ENCODE measurements at regions of chr1 and their contacts with region 1.

Region 1: GRCh38 chr1:47333922-47334764 is 553 bp downstream of the CMPK1 start:
- DNase-seq: peak; percentile 74
- H3K4me3 Mint-ChIP-seq: peak overlapping the region; percentile 93
- H3K27ac Mint-ChIP-seq: peak overlapping the region; percentile 95
- H3K4me1 Mint-ChIP-seq: peaks cover 18% of the 10 kb centered on the region
- H3K27me3 Mint-ChIP-seq: no peaks in the 10 kb centered on the region

Region 2: DNA sequence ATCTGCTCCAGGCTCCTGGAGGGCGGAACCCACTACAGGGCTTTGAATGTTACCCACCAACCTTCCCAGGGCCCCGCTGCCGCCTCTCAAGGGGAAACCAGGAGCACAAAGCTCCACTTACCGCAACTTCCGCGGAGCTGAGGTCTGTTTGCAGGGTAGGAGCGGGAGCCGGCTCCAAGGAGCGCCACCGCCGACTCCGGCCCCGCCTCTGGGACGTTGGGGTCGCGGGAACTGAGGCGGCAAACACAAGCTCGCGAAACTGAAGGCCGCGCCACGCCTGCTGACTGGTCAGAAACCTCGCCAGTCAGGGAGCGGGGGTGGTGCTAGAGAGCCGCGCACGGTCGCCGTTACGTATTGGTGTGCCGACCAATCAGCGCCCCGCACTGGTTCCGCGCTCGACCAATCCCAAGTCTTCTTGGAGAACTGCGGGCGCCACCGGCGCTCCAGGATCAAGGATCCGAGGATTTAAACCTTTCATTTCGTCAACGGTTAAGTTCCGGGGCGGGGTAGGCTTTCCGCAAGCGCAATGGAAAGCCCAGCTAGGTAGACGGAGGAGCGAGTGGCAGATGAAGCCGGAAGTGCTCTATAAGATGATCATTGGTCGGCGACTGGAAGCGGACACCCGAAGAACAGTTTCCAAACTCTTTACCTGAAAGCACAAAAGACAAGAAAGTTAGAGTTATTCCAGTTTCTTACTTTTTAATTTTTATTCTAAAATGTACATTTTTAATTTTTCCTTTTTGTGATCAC is 20.1 kb before region 1 on chr1 and contains the start of gene STIL:
- CTCF ChIA-PET with region 1: interaction called, 9 read pairs
- POLR2A ChIA-PET with region 1: interaction called, 10 read pairs
- DNase-seq: peak; percentile 99
- H3K4me3 Mint-ChIP-seq: peak within 1 kb of the TSS; percentile 93
- H3K27ac Mint-ChIP-seq: peak within 1 kb of the TSS; percentile 92
- H3K4me1 Mint-ChIP-seq: peaks cover 30% of the 10 kb centered on the region
- H3K27me3 Mint-ChIP-seq: no peaks in the 10 kb centered on the region
- total RNA-seq, gene STIL: 44.0 to 51.3 TPM

Measured in activated CD4-positive, alpha-beta T cell treated with anti-CD3 and anti-CD28 coated beads, Interleukin-2, amount 10 ng/mL, durations not matched to agents 7 days and 5 days (primary cell).